Heart right ventricle (tissue), 16 donors: ENCODE measurements at regions of chr2 and their contacts with region 1.

Region 1: GRCh38 chr2:97988722-97989121 is 7.0 kb downstream of the TMEM131 start:
- DNase-seq: no peak
- ATAC-seq: no peak
- H3K4me3 ChIP-seq: no peak overlapping the region
- H3K27ac ChIP-seq: no peak overlapping the region
- H3K4me1 ChIP-seq: peaks cover 0 to 56% (median 31%) of the 10 kb centered on the region in 9 donors
- H3K27me3 ChIP-seq: no peaks in the 10 kb centered on the region
- CTCF ChIP-seq: no peak

Region 2: DNA sequence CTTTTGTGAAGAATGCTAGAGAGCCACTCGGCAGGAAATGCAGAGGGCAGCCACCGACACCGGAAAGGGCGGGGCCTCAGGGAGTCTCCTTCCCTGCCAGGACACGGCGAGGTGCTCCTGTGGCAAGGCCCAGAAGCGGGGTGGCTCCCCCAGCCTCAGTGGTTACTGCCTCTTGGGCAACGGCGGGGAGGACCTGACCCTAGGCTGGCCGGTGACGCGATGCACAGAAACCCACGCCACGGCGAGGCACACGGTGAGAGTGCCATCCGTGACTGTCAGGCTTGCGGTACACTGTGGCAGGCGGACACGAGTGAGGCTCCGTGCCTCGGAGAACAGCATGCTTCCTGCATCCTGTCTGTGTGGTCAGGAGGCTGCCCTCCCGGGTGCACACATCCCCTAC is 227.5 kb before region 1 on chr2:
- intact Hi-C with region 1: no loop called
- DNase-seq: peak in 1 of 2 donors; percentile 18
- ATAC-seq: peak in 3 of 8 donors; percentile 27 to 36 (median 32)
- H3K4me3 ChIP-seq: no peak overlapping the region
- H3K27ac ChIP-seq: peak overlapping the region in 3 of 10 donors; percentile 7 to 60 (median 35)
- H3K4me1 ChIP-seq: peaks cover 2 to 49% (median 32%) of the 10 kb centered on the region in 9 donors
- H3K27me3 ChIP-seq: no peaks in the 10 kb centered on the region
- CTCF ChIP-seq: no peak

Region 3: GRCh38 chr2:97870396-97870843 is 118.3 kb before region 1 on chr2:
- intact Hi-C with region 1: loop called in 1 of 10 experiments (anchors 10 kb)
- DNase-seq: peak in 1 of 2 donors; percentile 26
- ATAC-seq: peak; percentile 59 to 95 (median 90)
- H3K4me3 ChIP-seq: no peak overlapping the region
- H3K27ac ChIP-seq: peak overlapping the region; percentile 68 to 89 (median 78)
- H3K4me1 ChIP-seq: peaks cover 5 to 48% (median 37%) of the 10 kb centered on the region in 9 donors
- H3K27me3 ChIP-seq: no peaks in the 10 kb centered on the region
- CTCF ChIP-seq: peak in 1 of 9 donors; percentile 8

Region 4: GRCh38 chr2:98295721-98296414 is 307.1 kb after region 1 on chr2:
- intact Hi-C with region 1: no loop called
- DNase-seq: no peak
- ATAC-seq: no peak
- H3K4me3 ChIP-seq: no peak overlapping the region
- H3K27ac ChIP-seq: no peak overlapping the region
- H3K4me1 ChIP-seq: peaks cover 0 to 12% (median 0%) of the 10 kb centered on the region in 9 donors
- H3K27me3 ChIP-seq: peaks cover 0 to 10% (median 0%) of the 10 kb centered on the region in 7 donors
- CTCF ChIP-seq: no peak